ENCODE measurements at regions of chr16 and their contacts with region 1.

Region 1: GRCh38 chr16:81366316-81366932 is 51.7 kb downstream of the GAN start:
- DNase-seq: no peak
- ATAC-seq: peak; percentile 71
- H3K4me3 Mint-ChIP-seq: no peak overlapping the region
- H3K27ac Mint-ChIP-seq: no peak overlapping the region
- H3K4me1 Mint-ChIP-seq: no peaks in the 10 kb centered on the region
- H3K27me3 Mint-ChIP-seq: no peaks in the 10 kb centered on the region

Region 2: GRCh38 chr16:81261049-81261648 is 105.3 kb before region 1 on chr16:
- CTCF ChIA-PET with region 1: interaction called, 11 read pairs
- POLR2A ChIA-PET with region 1: no interaction called
- intact Hi-C with region 1: no loop called
- DNase-seq: peak; percentile 55
- ATAC-seq: peak; percentile 65
- H3K4me3 Mint-ChIP-seq: no peak overlapping the region
- H3K27ac Mint-ChIP-seq: no peak overlapping the region
- H3K4me1 Mint-ChIP-seq: no peaks in the 10 kb centered on the region
- H3K27me3 Mint-ChIP-seq: peaks cover 5% of the 10 kb centered on the region

Region 3: GRCh38 chr16:81505011-81505661 is 138.7 kb after region 1 on chr16:
- CTCF ChIA-PET with region 1: no interaction called
- POLR2A ChIA-PET with region 1: no interaction called
- intact Hi-C with region 1: no loop called
- DNase-seq: no peak
- ATAC-seq: no peak
- H3K4me3 Mint-ChIP-seq: no peak overlapping the region
- H3K27ac Mint-ChIP-seq: no peak overlapping the region
- H3K4me1 Mint-ChIP-seq: peaks cover 11% of the 10 kb centered on the region
- H3K27me3 Mint-ChIP-seq: no peaks in the 10 kb centered on the region

Region 4: DNA sequence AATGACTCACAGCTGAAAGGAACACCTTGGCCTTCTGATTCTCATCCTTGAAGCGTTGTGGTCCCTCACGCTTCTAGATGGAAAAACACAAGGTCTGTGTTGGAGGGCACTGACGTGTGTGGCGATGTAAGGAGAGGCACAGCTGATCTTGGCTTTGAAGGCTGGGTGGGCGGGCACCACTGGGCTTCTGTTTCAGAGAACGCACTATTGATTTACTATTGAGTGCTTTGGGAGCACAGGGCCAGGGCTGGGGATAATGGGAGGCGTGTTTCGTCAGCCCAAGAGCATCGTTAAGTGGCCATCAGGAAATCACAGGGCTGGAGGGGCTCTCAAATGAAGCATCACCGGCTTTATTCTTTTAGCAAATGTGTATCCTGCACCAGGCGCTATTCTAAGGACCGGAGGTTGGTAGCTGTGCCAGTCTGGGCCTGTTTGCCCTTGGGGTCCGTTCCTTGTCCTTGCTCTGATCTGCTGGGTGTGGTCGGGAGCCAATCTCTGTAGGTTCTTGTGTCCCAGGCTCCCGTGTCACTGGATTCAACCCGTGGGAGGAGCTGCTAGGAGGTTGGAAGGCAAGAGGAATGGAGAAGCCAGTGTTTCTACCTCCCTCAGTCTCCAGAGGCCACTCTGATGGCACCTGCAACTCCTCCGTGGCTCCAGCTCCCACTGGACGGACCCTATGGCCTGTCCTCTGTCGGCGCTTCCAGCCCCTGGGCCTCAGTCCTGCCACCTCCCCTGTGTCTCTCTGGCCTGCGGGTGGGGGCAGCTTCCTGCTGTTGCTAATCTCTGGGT is 149.1 kb after region 1 on chr16:
- CTCF ChIA-PET with region 1: no interaction called
- POLR2A ChIA-PET with region 1: no interaction called
- intact Hi-C with region 1: no loop called
- DNase-seq: no peak
- ATAC-seq: no peak
- H3K4me3 Mint-ChIP-seq: no peak overlapping the region
- H3K27ac Mint-ChIP-seq: no peak overlapping the region
- H3K4me1 Mint-ChIP-seq: peaks cover 20% of the 10 kb centered on the region
- H3K27me3 Mint-ChIP-seq: no peaks in the 10 kb centered on the region

Region 5: DNA sequence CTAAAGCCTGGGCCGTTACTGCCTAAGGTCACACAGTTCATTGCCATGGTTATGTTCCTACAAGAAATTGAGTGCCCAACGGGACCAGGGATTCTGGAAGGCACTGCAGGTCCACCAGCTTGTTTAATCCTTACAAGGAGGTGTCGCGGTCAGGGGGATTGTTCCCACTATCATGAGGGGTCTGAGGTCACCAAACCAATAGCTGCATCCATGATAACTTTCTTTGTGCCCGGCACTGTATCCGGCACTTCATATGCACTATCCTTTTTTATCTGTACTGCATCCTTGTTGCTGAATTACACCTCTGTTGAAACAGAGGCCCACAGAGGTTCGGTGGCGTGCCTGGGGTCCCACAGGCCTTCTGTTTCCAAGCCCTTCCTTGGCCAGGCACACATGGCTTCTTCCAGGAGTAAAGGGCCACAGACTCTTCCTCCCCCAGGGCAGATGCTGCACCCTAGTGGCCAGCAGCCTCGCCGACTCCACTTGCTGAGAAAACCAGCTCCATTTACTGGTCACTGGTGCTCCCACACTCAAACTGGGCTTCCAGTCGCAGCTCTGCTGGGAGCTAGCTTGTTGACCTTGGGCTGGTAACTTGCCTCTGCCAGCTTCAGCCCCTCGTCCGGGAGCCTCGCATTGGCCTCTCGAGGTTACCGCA is 330.7 kb after region 1 on chr16:
- CTCF ChIA-PET with region 1: no interaction called
- POLR2A ChIA-PET with region 1: no interaction called
- intact Hi-C with region 1: loop called in 1 of 2 experiments (anchors 1 kb)
- DNase-seq: peak; percentile 77
- ATAC-seq: peak; percentile 68
- H3K4me3 Mint-ChIP-seq: no peak overlapping the region
- H3K27ac Mint-ChIP-seq: no peak overlapping the region
- H3K4me1 Mint-ChIP-seq: no peaks in the 10 kb centered on the region
- H3K27me3 Mint-ChIP-seq: no peaks in the 10 kb centered on the region

Region 6: GRCh38 chr16:81730090-81731051 is 363.9 kb after region 1 on chr16:
- CTCF ChIA-PET with region 1: interaction called, 14 read pairs
- POLR2A ChIA-PET with region 1: no interaction called
- intact Hi-C with region 1: loop called in 1 of 2 experiments (anchors 2 kb)
- DNase-seq: peak; percentile 74
- ATAC-seq: peak; percentile 93
- H3K4me3 Mint-ChIP-seq: peak overlapping the region; percentile 73
- H3K27ac Mint-ChIP-seq: peak overlapping the region; percentile 91
- H3K4me1 Mint-ChIP-seq: peaks cover 15% of the 10 kb centered on the region
- H3K27me3 Mint-ChIP-seq: no peaks in the 10 kb centered on the region

Region 7: DNA sequence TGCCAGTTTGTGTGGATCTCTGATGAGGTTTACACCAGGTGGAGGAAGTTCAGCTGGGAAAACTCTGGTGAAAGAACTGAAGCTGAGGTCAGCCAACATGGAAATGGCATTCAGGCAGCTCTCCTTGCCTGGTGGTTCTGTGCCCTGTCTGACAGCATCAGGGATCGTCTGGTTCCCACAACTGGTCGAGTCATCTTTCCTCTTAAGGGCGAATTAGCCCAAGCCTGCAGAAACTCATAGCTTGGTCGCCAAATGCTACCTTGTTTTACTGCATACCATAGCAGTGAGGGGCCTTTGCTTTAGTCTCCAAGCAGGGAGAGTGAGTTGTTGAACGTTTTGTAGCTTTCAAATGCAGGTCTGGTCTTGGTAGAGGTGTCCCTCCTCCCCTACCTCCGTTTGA is 419.9 kb after region 1 on chr16:
- CTCF ChIA-PET with region 1: no interaction called
- POLR2A ChIA-PET with region 1: no interaction called
- intact Hi-C with region 1: no loop called
- DNase-seq: no peak
- ATAC-seq: no peak
- H3K4me3 Mint-ChIP-seq: no peak overlapping the region
- H3K27ac Mint-ChIP-seq: no peak overlapping the region
- H3K4me1 Mint-ChIP-seq: no peaks in the 10 kb centered on the region
- H3K27me3 Mint-ChIP-seq: peaks cover 10% of the 10 kb centered on the region

Region 8: GRCh38 chr16:81873843-81874752 is 507.7 kb after region 1 on chr16:
- CTCF ChIA-PET with region 1: interaction called, 3 read pairs
- POLR2A ChIA-PET with region 1: no interaction called
- intact Hi-C with region 1: loop called in 1 of 2 experiments (anchors 5 kb)
- DNase-seq: peak; percentile 75
- ATAC-seq: peak; percentile 86
- H3K4me3 Mint-ChIP-seq: no peak overlapping the region
- H3K27ac Mint-ChIP-seq: no peak overlapping the region
- H3K4me1 Mint-ChIP-seq: peaks cover 3% of the 10 kb centered on the region
- H3K27me3 Mint-ChIP-seq: peaks cover 2% of the 10 kb centered on the region